ENCODE measurements at regions of chrX and their contacts with region 1.

Region 1: DNA sequence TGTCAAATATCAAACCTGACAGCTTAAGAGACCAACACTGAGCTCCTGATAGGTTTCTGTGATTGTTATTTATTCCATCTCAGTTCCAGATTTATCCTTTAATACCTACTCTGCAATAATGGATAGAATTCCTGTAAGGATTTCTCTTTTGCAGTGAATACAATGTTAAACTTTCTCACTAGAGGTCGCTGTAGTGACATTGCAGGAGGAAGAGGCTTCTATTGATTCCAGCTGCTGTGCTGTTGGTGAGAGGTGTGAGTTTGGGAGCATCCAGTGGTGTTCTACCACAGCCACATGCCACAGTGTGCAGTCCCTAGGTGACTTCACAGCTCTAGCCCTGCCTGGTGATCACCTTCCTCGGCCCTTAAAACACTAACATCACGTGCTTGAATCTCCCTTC is 34.6 kb upstream of the DCAF8L2 start:
- DNase-seq: no peak
- H3K4me3 ChIP-seq: no peak overlapping the region
- H3K27ac ChIP-seq: no peak overlapping the region
- H3K27me3 ChIP-seq: no peaks in the 10 kb centered on the region
- CTCF ChIP-seq: peak; percentile 65

Region 2: DNA sequence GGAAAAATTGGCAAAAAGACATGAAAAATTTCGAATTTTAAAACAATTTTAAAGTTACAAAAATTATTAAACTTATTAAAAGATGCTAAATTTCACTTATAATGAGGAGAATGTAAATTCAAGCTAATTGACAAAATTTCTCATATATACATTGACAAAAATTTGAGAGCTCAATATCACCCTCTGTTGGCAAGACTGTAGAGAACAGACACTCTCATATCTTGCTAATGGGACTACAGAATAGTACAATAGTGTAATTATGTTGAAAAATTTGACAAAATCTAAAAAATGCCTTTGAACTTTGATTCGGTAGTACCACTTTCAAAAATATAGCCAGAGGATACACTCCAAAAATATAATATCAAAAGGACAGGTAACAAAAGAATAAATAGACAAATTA is 64.5 kb after region 1 on chrX:
- CTCF ChIA-PET with region 1: interaction called, 38 read pairs
- POLR2A ChIA-PET with region 1: no interaction called
- DNase-seq: no peak
- H3K4me3 ChIP-seq: no peak overlapping the region
- H3K27ac ChIP-seq: no peak overlapping the region
- H3K27me3 ChIP-seq: no peaks in the 10 kb centered on the region
- CTCF ChIP-seq: peak; percentile 45

Region 3: DNA sequence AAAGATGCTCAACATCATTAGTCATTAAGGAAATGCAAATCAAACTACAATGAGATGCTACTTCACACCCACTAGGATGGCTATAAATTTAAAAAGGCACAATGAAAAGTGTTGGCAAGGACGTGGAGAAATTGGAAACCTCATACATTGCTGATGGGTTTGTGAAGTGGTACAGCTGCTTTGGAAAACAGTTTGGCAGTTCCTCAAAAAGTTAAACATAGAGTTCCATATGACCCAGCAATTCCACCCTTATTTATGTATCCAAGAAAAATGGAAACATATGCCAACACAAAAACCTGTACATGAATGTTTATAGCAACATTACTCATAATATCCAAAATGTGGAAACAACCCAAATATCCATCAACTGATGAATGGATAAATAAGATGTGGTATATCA is 151.0 kb after region 1 on chrX:
- CTCF ChIA-PET with region 1: no interaction called
- POLR2A ChIA-PET with region 1: no interaction called
- DNase-seq: no peak
- H3K4me3 ChIP-seq: no peak overlapping the region
- H3K27ac ChIP-seq: no peak overlapping the region
- H3K27me3 ChIP-seq: no peaks in the 10 kb centered on the region
- CTCF ChIP-seq: no peak

Measured in AG04450 (cell line).